ENCODE measurements at regions of chr12 and their contacts with region 1.

Region 1: GRCh38 chr12:92570056-92570753 is 132.6 kb upstream of the PLEKHG7 start:
- DNase-seq: peak; percentile 42 to 69 (median 66)
- H3K4me3 ChIP-seq: no peak overlapping the region
- H3K4me3 Mint-ChIP-seq: no peak overlapping the region
- H3K27ac ChIP-seq: no peak overlapping the region
- H3K27ac Mint-ChIP-seq: no peak overlapping the region
- H3K4me1 ChIP-seq: peaks cover 0 to 2% of the 10 kb centered on the region in 2 donors
- H3K4me1 Mint-ChIP-seq: peaks cover 6% of the 10 kb centered on the region
- H3K27me3 ChIP-seq: no peaks in the 10 kb centered on the region
- H3K27me3 Mint-ChIP-seq: no peaks in the 10 kb centered on the region
- CTCF ChIP-seq: peak; percentile 92

Region 2: GRCh38 chr12:92654929-92655328 is 84.7 kb after region 1 on chr12:
- intact Hi-C with region 1: loop called in 1 of 2 experiments (anchors 5 kb)
- DNase-seq: no peak
- H3K4me3 ChIP-seq: no peak overlapping the region
- H3K4me3 Mint-ChIP-seq: no peak overlapping the region
- H3K27ac ChIP-seq: no peak overlapping the region
- H3K27ac Mint-ChIP-seq: no peak overlapping the region
- H3K4me1 ChIP-seq: peaks cover 2% of the 10 kb centered on the region in 2 donors
- H3K4me1 Mint-ChIP-seq: peaks cover 7% of the 10 kb centered on the region
- H3K27me3 ChIP-seq: no peaks in the 10 kb centered on the region
- H3K27me3 Mint-ChIP-seq: peaks cover 0 to 6% (median 0%) of the 10 kb centered on the region in 3 donors
- CTCF ChIP-seq: no peak

Measured in CD14-positive monocyte (primary cell).